HCT116 (cell line): ENCODE measurements at regions of chr15 and their contacts with region 1.

Region 1: DNA sequence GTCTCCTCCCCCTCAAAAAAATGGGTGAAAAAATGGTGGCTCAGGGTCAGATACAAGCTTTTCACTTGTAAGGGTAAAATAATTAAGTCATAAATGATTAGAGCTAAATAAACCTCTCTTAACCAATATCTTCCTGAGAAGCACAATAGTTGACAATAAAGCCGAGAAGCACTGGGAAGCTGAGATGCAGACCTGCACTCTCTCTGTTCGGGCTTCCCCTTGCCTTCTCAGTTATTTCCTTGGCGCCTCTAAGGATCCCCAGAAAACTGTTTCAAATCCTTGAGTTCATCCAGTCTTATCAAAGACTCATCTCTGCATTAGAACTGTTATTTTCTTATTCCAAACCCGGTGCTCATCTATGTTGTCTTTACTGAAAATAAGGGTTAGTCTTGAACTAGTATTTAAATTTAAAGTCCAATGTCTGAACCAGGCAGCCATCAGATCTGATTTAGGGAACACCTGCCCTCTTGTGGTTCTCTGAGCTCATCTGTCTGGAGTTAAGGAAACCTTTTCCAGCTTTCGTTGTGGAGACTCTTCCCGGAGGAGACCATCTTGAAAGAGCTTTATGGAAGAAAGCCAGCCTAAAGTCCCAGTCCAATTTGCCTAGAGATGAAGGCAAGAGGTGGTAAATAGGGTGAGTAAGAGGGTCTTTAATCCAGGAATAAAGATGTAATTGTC is 256.4 kb upstream of the MCTP2 start:
- DNase-seq: peak; percentile 2
- ATAC-seq: peak; percentile 49; the same call in 1 of the 2 replicates
- H3K4me3 ChIP-seq: no peak overlapping the region
- H3K27ac ChIP-seq: no peak overlapping the region
- H3K4me1 ChIP-seq: no peaks in the 10 kb centered on the region
- H3K27me3 ChIP-seq: no peaks in the 10 kb centered on the region
- CTCF ChIP-seq: peak in 2 of 3 experiments; percentile 35 to 46; a peak in 4 of 6 replicates
- POLR2A ChIP-seq: no peak
- RAD21 ChIP-seq: peak; percentile 31; the same call in 1 of the 2 replicates

Region 2: DNA sequence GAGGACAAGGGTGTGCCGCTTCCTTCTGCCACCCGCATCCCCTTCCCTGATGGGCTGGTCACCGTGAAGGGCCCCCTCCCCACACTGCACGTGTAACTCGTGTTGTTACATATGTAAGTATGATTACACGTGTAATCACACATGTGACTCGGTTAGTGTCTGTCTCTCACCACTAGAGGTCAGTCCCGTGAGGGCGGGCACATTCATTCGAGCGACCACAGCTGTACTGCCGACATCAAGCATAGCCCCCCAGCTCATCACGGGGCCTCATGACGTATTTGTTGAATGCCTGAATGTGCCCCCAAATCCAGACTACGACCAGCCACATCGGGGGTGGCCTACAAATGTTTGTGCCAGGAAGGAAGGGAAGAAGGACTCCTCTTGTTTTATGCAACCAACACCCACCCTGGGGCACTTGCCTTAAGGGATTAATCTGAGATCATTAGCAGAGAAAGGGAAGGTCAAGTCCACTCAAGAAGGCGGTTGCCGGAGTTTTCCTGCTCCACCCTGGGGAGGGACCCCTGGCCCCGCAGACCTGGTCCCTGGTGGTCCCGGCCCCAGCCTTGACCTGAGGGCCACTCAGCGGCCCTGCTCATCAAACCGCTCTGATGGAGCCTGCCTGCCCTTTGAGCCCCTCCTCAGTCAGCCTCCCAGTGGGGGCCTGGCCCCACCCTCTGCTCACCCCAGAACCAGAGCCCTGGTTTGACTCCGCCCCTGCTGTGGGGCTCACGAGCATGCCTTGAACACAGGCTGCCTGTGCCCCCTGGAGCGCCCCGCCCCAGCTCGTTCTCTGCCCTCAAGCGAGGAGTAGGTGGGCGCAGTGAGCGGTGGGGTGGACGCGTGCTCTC is 938.8 kb before region 1 on chr15:
- CTCF ChIA-PET with region 1: interaction called, 3 read pairs
- POLR2A ChIA-PET with region 1: no interaction called
- RAD21 ChIA-PET with region 1: no interaction called
- intact Hi-C with region 1: loop called (anchors 2 kb)
- DNase-seq: peak; percentile 37
- ATAC-seq: peak; percentile 86
- H3K4me3 ChIP-seq: no peak overlapping the region
- H3K27ac ChIP-seq: no peak overlapping the region
- H3K4me1 ChIP-seq: peaks cover 0 to 9% of the 10 kb centered on the region in 2 experiments; a peak in 1 of 4 replicates
- H3K27me3 ChIP-seq: no peaks in the 10 kb centered on the region
- CTCF ChIP-seq: peak; percentile 37 to 73 (median 68); a peak in 5 of 6 replicates
- POLR2A ChIP-seq: no peak
- RAD21 ChIP-seq: peak; percentile 57; the same call in 1 of the 2 replicates

Region 3: DNA sequence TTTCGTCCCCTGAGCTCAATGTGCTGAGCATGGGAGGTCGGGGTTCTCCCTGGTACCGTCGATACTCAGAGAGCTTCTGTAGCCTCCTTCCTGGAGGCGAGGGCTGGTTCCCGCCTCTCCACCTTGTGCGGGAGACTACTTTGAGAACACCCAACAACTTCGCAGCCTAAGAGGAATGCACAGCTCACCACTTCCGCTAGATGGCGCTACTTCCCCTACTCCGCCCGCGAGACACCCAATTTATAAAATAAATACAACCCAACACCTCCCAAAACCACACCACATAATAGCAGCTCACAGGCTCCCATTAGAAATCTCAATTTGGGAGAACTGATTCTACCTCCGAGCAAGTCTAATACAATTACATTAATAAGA is 887.1 kb before region 1 on chr15:
- CTCF ChIA-PET with region 1: interaction called, 11 read pairs
- POLR2A ChIA-PET with region 1: no interaction called
- RAD21 ChIA-PET with region 1: no interaction called
- intact Hi-C with region 1: loop called (anchors 10 kb)
- DNase-seq: peak; percentile 22
- ATAC-seq: peak; percentile 93
- H3K4me3 ChIP-seq: no peak overlapping the region
- H3K27ac ChIP-seq: no peak overlapping the region
- H3K4me1 ChIP-seq: peaks cover 0 to 5% of the 10 kb centered on the region in 2 experiments; a peak in 1 of 4 replicates
- H3K27me3 ChIP-seq: peaks cover 40% of the 10 kb centered on the region
- CTCF ChIP-seq: peak; percentile 63 to 89 (median 87); a peak in 5 of 6 replicates
- POLR2A ChIP-seq: no peak
- RAD21 ChIP-seq: peak; percentile 77